ENCODE measurements at regions of chr12 and their contacts with region 1.

Region 1: GRCh38 chr12:48618541-48618940 is 48.7 kb upstream of the LALBA start:
- DNase-seq: peak; percentile 62
- H3K4me3 ChIP-seq: no peak overlapping the region; a peak in 1 of 4 replicates
- H3K27ac ChIP-seq: no peak overlapping the region
- H3K4me1 ChIP-seq: no peaks in the 10 kb centered on the region
- H3K27me3 ChIP-seq: no peaks in the 10 kb centered on the region; the same call in 1 of the 2 replicates
- CTCF ChIP-seq: peak; percentile 94
- EP300 ChIP-seq: no peak
- RAD21 ChIP-seq: peak; percentile 97

Region 2: GRCh38 chr12:48165094-48165981 is 453.2 kb before region 1 on chr12:
- CTCF ChIA-PET with region 1: interaction called, 11 read pairs
- POLR2A ChIA-PET with region 1: no interaction called
- DNase-seq: peak; percentile 67
- H3K4me3 ChIP-seq: peak overlapping the region in 1 of 2 experiments; percentile 32; a peak in 1 of 4 replicates
- H3K27ac ChIP-seq: no peak overlapping the region
- H3K4me1 ChIP-seq: no peaks in the 10 kb centered on the region; a peak in 1 of 4 replicates
- H3K27me3 ChIP-seq: no peaks in the 10 kb centered on the region
- CTCF ChIP-seq: peak; percentile 94
- EP300 ChIP-seq: no peak
- RAD21 ChIP-seq: peak; percentile 85

Region 3: GRCh38 chr12:48189331-48190125 is 429.0 kb before region 1 on chr12:
- CTCF ChIA-PET with region 1: interaction called, 10 read pairs
- POLR2A ChIA-PET with region 1: no interaction called
- DNase-seq: peak; percentile 66
- H3K4me3 ChIP-seq: no peak overlapping the region; a peak in 1 of 4 replicates
- H3K27ac ChIP-seq: no peak overlapping the region
- H3K4me1 ChIP-seq: peaks cover 14 to 27% of the 10 kb centered on the region in 2 experiments
- H3K27me3 ChIP-seq: no peaks in the 10 kb centered on the region
- CTCF ChIP-seq: peak; percentile 86
- EP300 ChIP-seq: no peak
- RAD21 ChIP-seq: peak; percentile 87

Region 4: DNA sequence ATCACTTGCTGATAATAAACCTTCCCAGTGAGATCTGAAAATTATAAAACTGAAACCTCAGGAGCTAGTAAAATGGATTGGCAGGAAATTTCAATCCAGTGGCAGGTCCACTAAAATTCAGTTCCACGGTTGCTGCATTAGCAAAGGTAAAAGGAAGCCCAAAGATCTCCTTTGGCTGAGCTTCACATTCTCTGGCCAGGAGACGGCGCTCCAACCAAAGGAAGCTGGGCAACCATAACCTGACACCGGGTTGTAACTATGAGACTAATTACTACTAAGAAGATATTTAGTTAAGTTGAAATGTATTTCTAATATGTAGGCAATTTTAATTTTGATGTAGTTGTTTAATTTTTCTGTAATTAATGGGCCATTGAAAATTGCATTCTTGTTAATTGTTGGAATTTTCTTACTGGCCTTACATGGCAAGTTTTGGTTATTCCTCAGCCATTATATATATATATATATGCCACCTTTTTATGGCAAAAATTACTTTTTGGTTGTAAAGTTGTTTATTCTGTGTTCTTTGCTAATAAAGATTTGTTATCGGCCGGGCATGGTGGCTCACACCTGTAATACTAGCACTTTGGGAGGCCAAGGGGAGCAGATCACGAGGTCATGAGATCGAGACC is 76.1 kb before region 1 on chr12:
- CTCF ChIA-PET with region 1: interaction called, 30 read pairs
- POLR2A ChIA-PET with region 1: no interaction called
- DNase-seq: no peak
- H3K4me3 ChIP-seq: no peak overlapping the region; a peak in 1 of 4 replicates
- H3K27ac ChIP-seq: no peak overlapping the region
- H3K4me1 ChIP-seq: no peaks in the 10 kb centered on the region
- H3K27me3 ChIP-seq: peaks cover 7% of the 10 kb centered on the region
- CTCF ChIP-seq: peak; percentile 60
- EP300 ChIP-seq: no peak
- RAD21 ChIP-seq: peak; percentile 52

Region 5: GRCh38 chr12:48580831-48581230 is 37.7 kb before region 1 on chr12:
- CTCF ChIA-PET with region 1: interaction called, 11 read pairs
- POLR2A ChIA-PET with region 1: no interaction called
- DNase-seq: no peak
- H3K4me3 ChIP-seq: no peak overlapping the region
- H3K27ac ChIP-seq: no peak overlapping the region
- H3K4me1 ChIP-seq: no peaks in the 10 kb centered on the region
- H3K27me3 ChIP-seq: no peaks in the 10 kb centered on the region; the same call in 1 of the 2 replicates
- CTCF ChIP-seq: no peak
- EP300 ChIP-seq: no peak
- RAD21 ChIP-seq: no peak